Posterior vena cava (tissue), 2 donors: ENCODE measurements at regions of chr4 and their contacts with region 1.

Region 1: DNA sequence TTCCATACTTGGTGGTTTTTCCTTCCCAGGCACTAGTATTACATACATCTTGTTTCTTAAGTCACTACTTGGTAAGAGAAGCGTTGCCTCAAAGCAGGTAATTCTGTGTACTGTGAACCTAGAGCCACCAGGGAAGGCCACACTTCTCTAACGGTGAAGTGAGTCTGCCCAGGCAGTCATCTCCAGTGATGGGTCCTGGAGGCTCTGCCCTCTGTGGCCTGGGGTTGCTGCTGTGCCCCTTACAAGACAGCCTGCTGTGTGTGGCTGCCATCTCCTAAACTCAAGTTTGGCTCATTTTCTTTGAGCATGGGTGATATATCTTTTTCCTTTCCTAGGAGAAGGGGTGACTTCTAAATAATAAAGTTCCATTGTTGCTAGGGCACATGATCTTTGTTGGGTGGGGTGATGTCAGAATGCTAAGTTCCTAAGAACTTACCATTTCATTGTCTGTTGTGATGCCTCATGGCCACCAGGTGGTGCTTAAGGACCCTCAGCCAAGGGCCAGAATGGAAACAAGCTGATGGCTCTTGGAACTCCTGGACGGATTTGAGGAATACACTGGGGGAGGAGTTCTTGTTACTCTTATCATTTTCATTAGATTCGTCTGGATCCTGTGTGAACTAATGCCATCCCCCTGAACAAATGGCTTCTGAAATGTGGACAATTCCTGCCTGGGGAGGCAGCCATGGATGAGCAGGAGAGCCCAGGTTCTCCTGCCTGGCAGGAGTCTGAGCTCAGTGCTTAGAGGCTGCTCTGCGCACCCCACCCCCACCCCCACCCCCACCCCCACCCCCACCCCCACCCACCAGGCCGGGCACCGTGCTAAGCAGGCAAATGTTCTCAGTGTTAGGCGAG is 41.1 kb upstream of the WDR1 start:
- DNase-seq: no peak

Region 2: DNA sequence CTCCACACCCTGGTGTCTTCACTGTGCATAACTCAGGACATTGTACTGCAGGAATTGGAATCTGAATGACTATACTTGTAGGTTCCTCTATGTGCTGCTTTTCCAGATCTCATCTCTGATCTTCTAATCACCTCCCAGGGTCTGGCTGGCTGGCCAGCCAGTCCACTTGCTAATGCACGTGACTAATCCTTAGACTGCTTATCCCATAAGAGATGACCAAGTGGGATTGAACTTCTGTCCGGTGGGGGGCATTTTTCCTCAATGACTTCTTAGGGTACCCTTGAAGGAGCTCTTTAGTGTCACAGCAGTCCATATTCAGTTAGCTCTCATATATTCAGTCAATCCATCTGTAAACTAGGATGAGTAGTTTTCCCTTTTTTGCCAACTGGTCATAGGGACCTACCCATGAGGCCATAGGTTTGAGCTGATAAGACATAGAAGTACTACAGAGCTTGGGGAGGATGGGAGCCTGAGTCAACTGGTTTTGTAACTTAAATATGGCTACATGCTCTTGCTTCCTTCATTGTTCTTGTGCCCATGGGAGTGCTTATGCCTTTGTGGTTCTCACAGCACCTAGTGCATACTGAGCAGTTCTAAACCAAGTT is 30.8 kb after region 1 on chr4:
- intact Hi-C with region 1: loop called in 1 of 2 experiments (anchors 2 kb)
- DNase-seq: no peak

Region 3: GRCh38 chr4:10403633-10404445 is 246.1 kb after region 1 on chr4:
- intact Hi-C with region 1: loop called (anchors 10 kb)
- DNase-seq: no peak